ENCODE measurements at regions of chr2 and their contacts with region 1.

Region 1: DNA sequence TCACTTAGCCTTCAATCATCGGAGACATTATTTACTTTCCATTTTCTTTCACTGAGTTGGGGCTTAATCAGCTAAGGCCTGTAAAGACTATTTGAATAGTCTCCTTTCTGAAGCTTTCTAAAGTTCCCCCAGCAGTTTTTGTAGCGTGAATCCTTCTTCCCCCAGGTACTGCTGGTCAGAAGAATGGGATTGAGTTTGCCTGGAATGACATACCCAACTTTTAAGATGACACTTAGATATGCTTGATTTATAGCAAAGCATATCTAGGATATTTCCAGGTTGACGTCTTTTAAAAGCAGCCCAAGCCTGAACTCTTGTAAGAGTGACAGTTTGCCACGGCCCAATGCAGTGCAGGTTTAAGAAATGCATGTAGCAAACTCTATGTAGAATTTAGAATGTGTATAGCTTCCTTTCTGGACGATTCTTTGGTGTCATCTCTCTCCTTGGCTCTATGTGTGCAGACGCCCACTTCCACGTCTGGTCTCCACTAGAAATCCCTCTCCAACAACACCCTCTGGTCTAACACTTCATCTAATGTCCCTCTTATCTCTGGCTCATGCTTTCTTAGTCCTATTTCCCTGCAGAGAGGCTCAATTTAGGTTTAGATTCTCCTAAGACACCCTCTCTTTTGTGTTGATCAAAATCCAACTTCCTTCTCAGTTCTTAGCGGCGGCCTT is 175.0 kb upstream of the CYRIA start:
- DNase-seq: no peak

Region 2: GRCh38 chr2:16999347-17000183 is 158.9 kb after region 1 on chr2:
- intact Hi-C with region 1: loop called in 1 of 2 experiments (anchors 5 kb)
- DNase-seq: no peak

Region 3: DNA sequence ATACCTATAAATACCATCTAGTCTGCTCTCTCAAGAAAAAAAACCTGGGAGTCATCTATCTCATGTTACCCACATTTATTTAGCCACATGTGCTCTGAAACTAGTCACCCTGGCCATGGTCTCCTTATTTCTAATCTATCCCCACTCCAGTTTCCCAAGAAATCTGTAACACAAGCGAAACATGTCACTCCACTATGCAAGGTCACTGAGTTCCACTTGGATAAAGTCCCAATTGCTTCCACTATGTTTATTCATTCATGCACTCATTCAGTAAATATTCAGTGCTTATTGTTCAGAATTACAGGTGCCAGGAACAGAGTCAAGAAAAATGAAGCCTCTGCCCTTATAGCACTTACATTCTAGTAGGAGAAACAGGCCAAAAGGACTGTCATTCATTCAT is 194.4 kb after region 1 on chr2:
- intact Hi-C with region 1: no loop called
- DNase-seq: no peak